ENCODE measurements at regions of chr4 and their contacts with region 1.

Region 1: GRCh38 chr4:120056246-120056645 is 10.4 kb downstream of the MAD2L1 start:
- DNase-seq: no peak
- H3K4me3 ChIP-seq: no peak overlapping the region
- CTCF ChIP-seq: peak; percentile 10

Region 2: GRCh38 chr4:119506806-119507205 is 549.4 kb before region 1 on chr4:
- CTCF ChIA-PET with region 1: interaction called, 12 read pairs
- POLR2A ChIA-PET with region 1: no interaction called
- DNase-seq: no peak
- H3K4me3 ChIP-seq: no peak overlapping the region
- CTCF ChIP-seq: no peak

Region 3: GRCh38 chr4:120037411-120037810 is 18.8 kb before region 1 on chr4:
- CTCF ChIA-PET with region 1: no interaction called
- POLR2A ChIA-PET with region 1: no interaction called
- DNase-seq: no peak
- H3K4me3 ChIP-seq: no peak overlapping the region
- CTCF ChIP-seq: no peak

Measured in AG04449 (cell line).